CD4-positive, alpha-beta T cell (primary cell): ENCODE measurements at regions of chr19 and their contacts with region 1.

Region 1: DNA sequence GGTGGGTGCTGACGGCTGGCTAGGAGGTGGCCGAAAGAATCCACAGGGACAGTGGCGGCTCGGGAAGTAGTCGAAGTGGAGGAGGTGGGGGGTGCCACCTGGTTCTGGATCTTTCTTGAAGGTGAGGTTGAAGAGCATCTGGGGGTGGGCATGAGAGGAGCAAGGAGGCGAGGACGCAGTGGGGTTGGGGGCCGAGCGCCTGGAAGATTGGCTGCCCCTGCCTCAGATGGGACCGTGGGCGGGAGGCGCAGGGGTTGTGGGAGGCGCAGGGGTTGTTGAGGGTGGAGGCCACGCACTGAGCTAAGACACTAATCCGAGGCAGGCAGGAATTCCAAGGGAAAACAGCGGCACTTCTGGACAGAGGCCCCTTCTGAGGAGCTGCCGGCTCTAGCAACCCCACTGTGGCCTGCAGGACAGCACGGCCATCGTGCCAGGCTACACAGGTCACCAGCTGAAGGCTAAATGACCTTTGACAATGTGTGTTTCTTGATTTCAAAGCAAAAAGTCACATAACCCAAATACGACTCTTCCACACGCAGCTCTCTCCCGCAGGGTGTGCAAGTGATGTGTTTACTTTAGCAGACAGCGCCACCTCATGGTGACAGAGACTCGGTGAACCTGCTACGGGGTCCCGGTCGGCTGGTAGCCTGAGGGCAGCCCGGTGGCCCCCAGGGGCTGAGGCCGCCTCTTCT is 44.1 kb upstream of the RANBP3 start:
- DNase-seq: peak; percentile 65 to 88 (median 76)
- ATAC-seq: peak; percentile 95
- H3K4me3 ChIP-seq: no peak overlapping the region
- H3K4me3 Mint-ChIP-seq: no peak overlapping the region
- H3K27ac ChIP-seq: no peak overlapping the region
- H3K27ac Mint-ChIP-seq: no peak overlapping the region
- H3K4me1 ChIP-seq: peaks cover 8% of the 10 kb centered on the region
- H3K4me1 Mint-ChIP-seq: no peaks in the 10 kb centered on the region
- H3K27me3 ChIP-seq: no peaks in the 10 kb centered on the region
- H3K27me3 Mint-ChIP-seq: peaks cover 6% of the 10 kb centered on the region
- CTCF ChIP-seq: peak; percentile 63

Region 2: GRCh38 chr19:5775668-5776309 is 246.2 kb before region 1 on chr19:
- CTCF ChIA-PET with region 1: no interaction called
- POLR2A ChIA-PET with region 1: no interaction called
- intact Hi-C with region 1: loop called in 1 of 2 experiments (anchors 10 kb)
- DNase-seq: no peak
- ATAC-seq: no peak
- H3K4me3 ChIP-seq: no peak overlapping the region
- H3K4me3 Mint-ChIP-seq: no peak overlapping the region
- H3K27ac ChIP-seq: no peak overlapping the region
- H3K27ac Mint-ChIP-seq: no peak overlapping the region
- H3K4me1 ChIP-seq: no peaks in the 10 kb centered on the region
- H3K4me1 Mint-ChIP-seq: no peaks in the 10 kb centered on the region
- H3K27me3 ChIP-seq: peaks cover 3% of the 10 kb centered on the region in 2 experiments
- H3K27me3 Mint-ChIP-seq: no peaks in the 10 kb centered on the region
- CTCF ChIP-seq: no peak

Region 3: GRCh38 chr19:5967994-5968430 is 54.0 kb before region 1 on chr19:
- CTCF ChIA-PET with region 1: interaction called, 3 read pairs
- POLR2A ChIA-PET with region 1: interaction called, 6 read pairs
- intact Hi-C with region 1: loop called in 1 of 2 experiments (anchors 5 kb)
- DNase-seq: peak; percentile 42 to 83 (median 50)
- ATAC-seq: peak; percentile 78
- H3K4me3 ChIP-seq: no peak overlapping the region
- H3K4me3 Mint-ChIP-seq: peak overlapping the region; percentile 40
- H3K27ac ChIP-seq: peak overlapping the region in 1 of 2 donors; percentile 22
- H3K27ac Mint-ChIP-seq: peak overlapping the region; percentile 98
- H3K4me1 ChIP-seq: peaks cover 81% of the 10 kb centered on the region
- H3K4me1 Mint-ChIP-seq: peaks cover 93% of the 10 kb centered on the region
- H3K27me3 ChIP-seq: no peaks in the 10 kb centered on the region
- H3K27me3 Mint-ChIP-seq: no peaks in the 10 kb centered on the region
- CTCF ChIP-seq: peak; percentile 93

Region 4: DNA sequence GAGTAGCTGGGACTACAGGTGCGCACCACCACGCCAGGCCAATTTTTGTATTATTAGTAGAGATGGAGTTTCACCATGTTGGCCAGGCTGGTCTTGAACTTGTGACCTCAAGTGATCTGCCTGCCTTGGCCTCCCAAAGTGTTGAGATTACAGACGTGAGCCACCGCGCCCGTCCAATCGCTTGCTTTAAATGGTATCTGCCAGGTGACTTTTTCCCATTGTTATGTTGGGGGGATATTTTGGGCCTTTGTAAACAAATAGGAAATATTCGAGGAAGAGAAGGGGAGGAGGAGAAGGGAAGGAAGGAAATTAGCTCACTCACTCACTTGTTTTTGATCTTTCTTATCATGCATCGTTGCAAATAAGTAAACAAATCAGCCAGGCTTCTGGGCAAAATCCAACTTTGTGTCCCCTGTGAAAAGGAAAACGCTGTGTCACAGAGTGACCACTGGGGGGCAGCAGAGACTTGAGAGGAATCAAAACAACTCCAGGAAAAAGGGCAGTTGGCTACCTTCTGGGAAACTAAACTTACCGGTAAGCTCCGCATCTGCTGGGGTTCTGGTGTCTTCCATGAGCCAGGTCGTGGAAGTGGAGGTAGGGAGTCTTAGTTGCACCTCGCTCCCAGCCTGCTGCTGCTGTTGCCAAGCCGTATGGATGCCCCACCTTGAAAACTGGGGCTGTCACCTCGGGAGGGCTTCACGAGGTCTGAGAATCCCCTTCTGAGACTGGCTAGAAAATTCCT is 34.8 kb before region 1 on chr19:
- CTCF ChIA-PET with region 1: interaction called, 8 read pairs
- POLR2A ChIA-PET with region 1: interaction called, 6 read pairs
- intact Hi-C with region 1: loop called (anchors 1 to 2 kb)
- DNase-seq: peak; percentile 55 to 88 (median 68)
- ATAC-seq: peak; percentile 58
- H3K4me3 ChIP-seq: peak overlapping the region; percentile 48
- H3K4me3 Mint-ChIP-seq: peak overlapping the region; percentile 64
- H3K27ac ChIP-seq: no peak overlapping the region
- H3K27ac Mint-ChIP-seq: no peak overlapping the region
- H3K4me1 ChIP-seq: peaks cover 22% of the 10 kb centered on the region
- H3K4me1 Mint-ChIP-seq: peaks cover 20% of the 10 kb centered on the region
- H3K27me3 ChIP-seq: no peaks in the 10 kb centered on the region
- H3K27me3 Mint-ChIP-seq: no peaks in the 10 kb centered on the region
- CTCF ChIP-seq: peak; percentile 97

Region 5: DNA sequence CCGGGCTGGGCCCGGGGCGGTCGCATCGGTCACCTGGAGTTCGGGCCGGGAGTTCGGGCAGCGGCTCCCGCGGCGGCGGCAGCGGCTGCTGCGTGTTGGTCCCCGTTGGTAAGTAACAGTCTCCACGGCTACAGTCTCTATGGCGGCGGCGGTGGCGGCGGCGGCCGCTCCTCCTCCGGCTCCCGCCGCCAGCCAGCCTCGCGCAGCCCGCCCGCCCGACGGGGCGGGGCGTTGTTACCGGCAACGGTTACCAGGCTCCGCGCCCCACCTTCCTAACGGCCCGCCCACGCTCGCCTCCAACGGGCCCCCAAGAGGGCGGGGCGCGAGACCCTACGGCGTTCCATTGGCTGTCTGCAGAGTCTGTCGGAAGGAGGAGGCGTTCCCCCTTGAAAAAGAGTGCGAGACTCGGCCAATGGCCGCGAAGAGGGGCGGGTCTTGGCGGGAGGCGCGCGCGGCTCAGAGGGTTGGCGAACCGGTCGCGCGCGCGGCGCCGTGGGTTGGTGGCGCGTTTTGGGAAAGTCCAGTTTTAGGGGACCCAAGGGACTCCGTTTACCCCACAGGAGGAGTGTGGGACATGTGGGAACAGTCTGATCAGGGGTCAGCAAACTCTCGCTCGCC is 88.4 kb after region 1 on chr19 and contains the start of gene RFX2:
- CTCF ChIA-PET with region 1: no interaction called
- POLR2A ChIA-PET with region 1: no interaction called
- intact Hi-C with region 1: no loop called
- DNase-seq: peak; percentile 98 to 100 (median 99)
- ATAC-seq: peak; percentile 96
- H3K4me3 ChIP-seq: peak within 1 kb of the TSS; percentile 65
- H3K4me3 Mint-ChIP-seq: peak within 1 kb of the TSS; percentile 89
- H3K27ac ChIP-seq: peak within 1 kb of the TSS; percentile 21 to 52
- H3K27ac Mint-ChIP-seq: peak within 1 kb of the TSS; percentile 74
- H3K4me1 ChIP-seq: peaks cover 27% of the 10 kb centered on the region
- H3K4me1 Mint-ChIP-seq: peaks cover 25% of the 10 kb centered on the region
- H3K27me3 ChIP-seq: peaks cover 2 to 4% of the 10 kb centered on the region in 2 experiments
- H3K27me3 Mint-ChIP-seq: peaks cover 15% of the 10 kb centered on the region
- CTCF ChIP-seq: no peak
- total RNA-seq, gene RFX2: 4.8 to 5.5 TPM